Activated B cell treated with CpG ODN at 0.5 μM for 24 hours (primary cell): ENCODE measurements at regions of chr14 and their contacts with region 1.

Region 1: GRCh38 chr14:95561001-95561412 is 26.2 kb downstream of the GLRX5 start:
- DNase-seq: peak; percentile 79
- ATAC-seq: peak; percentile 100
- H3K4me3 Mint-ChIP-seq: no peak overlapping the region
- H3K27ac Mint-ChIP-seq: no peak overlapping the region
- H3K4me1 Mint-ChIP-seq: peaks cover 4% of the 10 kb centered on the region
- H3K27me3 Mint-ChIP-seq: peaks cover 17% of the 10 kb centered on the region
- CTCF ChIP-seq: peak; percentile 71

Region 2: GRCh38 chr14:94559638-94560290 is 1001.2 kb before region 1 on chr14:
- CTCF ChIA-PET with region 1: no interaction called
- POLR2A ChIA-PET with region 1: no interaction called
- intact Hi-C with region 1: no loop called
- DNase-seq: no peak
- ATAC-seq: no peak
- H3K4me3 Mint-ChIP-seq: no peak overlapping the region
- H3K27ac Mint-ChIP-seq: no peak overlapping the region
- H3K4me1 Mint-ChIP-seq: no peaks in the 10 kb centered on the region
- H3K27me3 Mint-ChIP-seq: peaks cover 3% of the 10 kb centered on the region
- CTCF ChIP-seq: no peak

Region 3: DNA sequence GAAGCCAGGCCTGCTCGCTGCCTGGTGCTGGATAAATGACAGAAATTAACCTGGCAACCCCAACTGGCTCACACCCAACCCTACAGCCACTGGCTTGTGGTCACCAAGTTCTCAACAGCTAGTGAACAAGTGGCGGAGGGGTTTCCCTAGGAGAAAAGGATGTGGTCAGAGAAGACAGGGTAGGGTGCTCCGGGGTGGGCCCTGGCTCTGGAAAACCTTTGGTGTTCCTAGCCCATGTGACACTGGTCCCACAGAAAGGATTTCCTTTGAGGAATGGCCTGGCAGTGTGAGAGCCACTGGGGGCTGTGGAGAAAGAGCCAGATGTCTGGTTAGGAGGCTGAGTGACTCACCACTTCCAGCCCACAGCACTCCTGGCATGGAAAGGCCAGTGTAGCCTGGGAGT is 53.3 kb before region 1 on chr14:
- CTCF ChIA-PET with region 1: no interaction called
- POLR2A ChIA-PET with region 1: no interaction called
- intact Hi-C with region 1: no loop called
- DNase-seq: no peak
- ATAC-seq: no peak
- H3K4me3 Mint-ChIP-seq: no peak overlapping the region
- H3K27ac Mint-ChIP-seq: no peak overlapping the region
- H3K4me1 Mint-ChIP-seq: peaks cover 89% of the 10 kb centered on the region
- H3K27me3 Mint-ChIP-seq: no peaks in the 10 kb centered on the region
- CTCF ChIP-seq: no peak

Region 4: GRCh38 chr14:95609387-95609990 is 48.5 kb after region 1 on chr14:
- CTCF ChIA-PET with region 1: interaction called, 10 read pairs
- POLR2A ChIA-PET with region 1: no interaction called
- intact Hi-C with region 1: loop called (anchors 1 kb)
- DNase-seq: no peak
- ATAC-seq: peak; percentile 34
- H3K4me3 Mint-ChIP-seq: no peak overlapping the region
- H3K27ac Mint-ChIP-seq: no peak overlapping the region
- H3K4me1 Mint-ChIP-seq: peaks cover 24% of the 10 kb centered on the region
- H3K27me3 Mint-ChIP-seq: peaks cover 32% of the 10 kb centered on the region
- CTCF ChIP-seq: no peak

Region 5: GRCh38 chr14:95683793-95684192 is 122.8 kb after region 1 on chr14:
- CTCF ChIA-PET with region 1: interaction called, 7 read pairs
- POLR2A ChIA-PET with region 1: no interaction called
- intact Hi-C with region 1: loop called (anchors 1 kb)
- DNase-seq: no peak
- ATAC-seq: no peak
- H3K4me3 Mint-ChIP-seq: no peak overlapping the region
- H3K27ac Mint-ChIP-seq: no peak overlapping the region
- H3K4me1 Mint-ChIP-seq: peaks cover 65% of the 10 kb centered on the region
- H3K27me3 Mint-ChIP-seq: peaks cover 21% of the 10 kb centered on the region
- CTCF ChIP-seq: no peak

Region 6: DNA sequence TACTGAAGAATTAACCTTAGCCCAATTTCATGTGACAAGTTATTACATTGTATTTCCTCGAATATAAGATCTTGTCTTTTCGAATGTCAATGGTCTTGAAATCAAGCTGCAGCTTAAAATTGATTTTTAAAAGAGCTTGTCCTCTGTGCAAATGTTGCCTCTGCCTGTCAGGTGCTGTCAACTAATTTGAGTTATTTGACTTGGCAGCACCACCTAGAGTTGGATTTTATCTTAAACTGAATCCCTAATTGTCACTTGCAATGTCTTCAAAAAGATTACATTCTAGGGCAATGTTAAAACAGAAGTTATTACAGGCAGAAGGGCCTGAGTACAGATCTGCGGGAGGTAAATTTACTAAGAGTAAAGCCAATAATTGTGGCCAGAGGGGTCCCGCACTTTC is 289.4 kb after region 1 on chr14:
- CTCF ChIA-PET with region 1: interaction called, 4 read pairs
- POLR2A ChIA-PET with region 1: no interaction called
- intact Hi-C with region 1: loop called (anchors 1 kb)
- DNase-seq: no peak
- ATAC-seq: no peak
- H3K4me3 Mint-ChIP-seq: no peak overlapping the region
- H3K27ac Mint-ChIP-seq: no peak overlapping the region
- H3K4me1 Mint-ChIP-seq: peaks cover 2% of the 10 kb centered on the region
- H3K27me3 Mint-ChIP-seq: no peaks in the 10 kb centered on the region
- CTCF ChIP-seq: no peak

Region 7: GRCh38 chr14:96275177-96276112 is 714.4 kb after region 1 on chr14:
- CTCF ChIA-PET with region 1: no interaction called
- POLR2A ChIA-PET with region 1: no interaction called
- intact Hi-C with region 1: loop called (anchors 1 kb)
- DNase-seq: peak; percentile 33
- ATAC-seq: no peak
- H3K4me3 Mint-ChIP-seq: no peak overlapping the region
- H3K27ac Mint-ChIP-seq: no peak overlapping the region
- H3K4me1 Mint-ChIP-seq: peaks cover 2% of the 10 kb centered on the region
- H3K27me3 Mint-ChIP-seq: no peaks in the 10 kb centered on the region
- CTCF ChIP-seq: no peak